GM12878 (cell line): ENCODE measurements at regions of chr9 and their contacts with region 1.

Region 1: DNA sequence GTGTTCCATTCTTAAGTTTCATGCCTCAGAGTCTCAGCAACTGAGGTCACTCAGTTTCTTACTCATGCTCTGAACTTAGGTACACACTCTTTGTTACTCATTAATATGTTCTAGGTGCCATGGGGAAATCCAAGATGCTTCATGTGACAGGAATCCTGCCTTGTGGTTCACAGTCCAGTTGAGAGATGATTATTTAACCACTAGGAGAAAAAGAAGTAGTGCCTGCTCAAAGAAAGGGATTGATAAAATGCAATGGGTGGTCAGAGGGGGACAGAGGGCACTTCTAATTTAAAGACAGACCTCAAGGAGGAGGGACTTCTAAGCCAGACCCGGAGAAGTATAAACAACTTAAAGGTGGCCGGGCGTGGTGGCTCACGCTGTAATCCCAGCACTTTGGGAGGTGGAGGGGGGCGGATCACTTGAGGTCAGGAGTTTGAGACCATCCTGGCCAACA is 69.0 kb downstream of the UGCG start:
- DNase-seq: peak; percentile 90
- ATAC-seq: peak; percentile 80
- H3K4me3 ChIP-seq: no peak overlapping the region
- H3K27ac ChIP-seq: peak overlapping the region; percentile 56
- H3K4me1 ChIP-seq: peaks cover 25% of the 10 kb centered on the region
- H3K27me3 ChIP-seq: no peaks in the 10 kb centered on the region
- CTCF ChIP-seq: no peak
- EP300 ChIP-seq: peak; percentile 82 to 89
- POLR2A ChIP-seq: no peak
- RAD21 ChIP-seq: 0 out of 2 replicates have a peak, but pooled peaks have one; percentile 3

Region 2: GRCh38 chr9:111798786-111799185 is 166.8 kb before region 1 on chr9:
- CTCF ChIA-PET with region 1: no interaction called
- POLR2A ChIA-PET with region 1: no interaction called
- RAD21 ChIA-PET with region 1: no interaction called
- SMC1A ChIA-PET with region 1: no interaction called
- in situ Hi-C with region 1: no loop called
- intact Hi-C with region 1: no loop called
- DNase-seq: no peak
- ATAC-seq: no peak
- H3K4me3 ChIP-seq: no peak overlapping the region
- H3K27ac ChIP-seq: no peak overlapping the region
- H3K4me1 ChIP-seq: no peaks in the 10 kb centered on the region
- H3K27me3 ChIP-seq: no peaks in the 10 kb centered on the region
- CTCF ChIP-seq: no peak
- EP300 ChIP-seq: no peak
- POLR2A ChIP-seq: no peak
- RAD21 ChIP-seq: no peak

Region 3: DNA sequence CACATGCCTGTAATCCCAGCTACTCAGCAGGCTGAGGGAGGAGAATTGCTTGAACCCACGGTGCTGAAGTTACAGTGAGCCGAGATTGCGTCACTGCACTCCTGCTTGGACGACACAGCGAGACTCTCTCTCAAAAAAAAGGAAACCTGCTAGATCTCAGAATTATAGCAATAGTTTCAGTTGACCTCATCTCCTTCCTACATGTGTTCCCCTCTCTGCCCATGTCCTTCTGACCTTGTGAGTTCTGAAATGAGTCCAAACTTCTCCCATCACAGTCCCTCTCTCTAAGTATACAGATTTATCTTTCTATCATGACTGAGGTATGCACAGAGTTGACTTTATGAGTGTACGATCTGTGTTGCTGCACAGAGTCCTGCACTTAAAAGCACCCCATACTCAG is 126.2 kb before region 1 on chr9:
- CTCF ChIA-PET with region 1: no interaction called
- POLR2A ChIA-PET with region 1: no interaction called
- RAD21 ChIA-PET with region 1: no interaction called
- SMC1A ChIA-PET with region 1: no interaction called
- in situ Hi-C with region 1: no loop called
- intact Hi-C with region 1: no loop called
- DNase-seq: peak; percentile 39
- ATAC-seq: peak; percentile 88
- H3K4me3 ChIP-seq: no peak overlapping the region
- H3K27ac ChIP-seq: no peak overlapping the region
- H3K4me1 ChIP-seq: peaks cover 8% of the 10 kb centered on the region; the same call in 1 of the 2 replicates
- H3K27me3 ChIP-seq: no peaks in the 10 kb centered on the region
- CTCF ChIP-seq: no peak
- EP300 ChIP-seq: no peak
- POLR2A ChIP-seq: no peak
- RAD21 ChIP-seq: no peak

Region 4: DNA sequence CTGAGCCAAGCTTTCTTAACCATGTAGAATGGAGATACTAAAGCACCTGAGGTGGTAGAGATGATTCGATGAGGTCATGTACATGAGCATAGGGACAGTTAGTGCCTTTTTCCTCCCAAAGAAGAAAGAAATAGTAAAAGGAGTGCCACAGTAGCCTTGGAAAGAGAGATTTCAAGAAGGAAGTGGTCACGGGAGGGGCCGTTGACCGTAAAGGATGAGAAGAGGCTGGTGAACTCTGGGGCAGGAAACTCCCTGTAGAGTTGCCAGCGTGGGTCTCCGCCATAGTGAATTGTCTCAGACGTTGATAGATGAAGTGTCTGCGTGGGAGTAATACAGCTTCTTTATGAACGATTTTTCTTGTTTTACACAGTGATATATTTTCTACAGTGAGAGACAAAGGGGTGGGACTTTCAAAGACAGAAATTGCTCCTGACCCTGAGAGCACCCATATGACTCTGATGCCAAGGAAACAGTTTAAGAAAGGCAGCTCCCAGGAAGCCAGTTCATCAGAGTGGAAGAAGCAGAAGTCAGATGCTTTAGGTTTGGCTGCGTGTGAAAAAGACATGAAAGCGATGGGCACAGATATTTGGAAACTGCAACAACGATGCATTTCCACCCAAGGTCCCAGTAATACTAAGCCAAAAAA is 27.7 kb before region 1 on chr9:
- CTCF ChIA-PET with region 1: interaction called, 3 read pairs
- POLR2A ChIA-PET with region 1: interaction called, 8 read pairs
- RAD21 ChIA-PET with region 1: interaction called, 22 read pairs
- SMC1A ChIA-PET with region 1: interaction called, 57 read pairs
- in situ Hi-C with region 1: no loop called
- intact Hi-C with region 1: no loop called
- DNase-seq: peak; percentile 74
- ATAC-seq: peak; percentile 90
- H3K4me3 ChIP-seq: no peak overlapping the region
- H3K27ac ChIP-seq: peak overlapping the region; percentile 80
- H3K4me1 ChIP-seq: peaks cover 21% of the 10 kb centered on the region
- H3K27me3 ChIP-seq: no peaks in the 10 kb centered on the region
- CTCF ChIP-seq: no peak
- EP300 ChIP-seq: peak; percentile 68 to 77; a peak in 2 of 4 replicates
- POLR2A ChIP-seq: no peak; the same call in none of the 2 replicates
- RAD21 ChIP-seq: no peak

Region 5: DNA sequence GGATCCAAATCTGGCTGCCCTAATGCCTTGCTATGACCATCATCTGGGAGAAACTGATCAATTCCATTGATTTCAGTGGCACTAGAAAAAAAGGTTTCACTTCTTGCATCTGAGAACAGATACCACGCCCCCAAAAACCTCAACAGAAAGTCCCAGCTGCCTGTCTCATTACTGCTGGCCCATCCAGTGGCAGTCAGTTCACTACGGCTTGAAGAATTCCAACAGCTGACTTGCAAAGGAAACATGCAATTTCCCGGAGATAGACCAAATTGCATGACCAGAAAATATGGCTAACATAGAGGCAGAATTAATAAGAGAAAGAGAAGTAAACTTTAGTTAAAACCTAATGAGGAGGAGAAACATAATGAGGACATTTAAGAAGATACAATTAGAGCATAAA is 20.4 kb before region 1 on chr9:
- CTCF ChIA-PET with region 1: interaction called, 4 read pairs
- POLR2A ChIA-PET with region 1: interaction called, 8 read pairs
- RAD21 ChIA-PET with region 1: interaction called, 13 read pairs
- SMC1A ChIA-PET with region 1: interaction called, 15 read pairs
- in situ Hi-C with region 1: no loop called
- intact Hi-C with region 1: no loop called
- DNase-seq: peak; percentile 65
- ATAC-seq: peak; percentile 87
- H3K4me3 ChIP-seq: no peak overlapping the region
- H3K27ac ChIP-seq: peak overlapping the region; percentile 47
- H3K4me1 ChIP-seq: peaks cover 34% of the 10 kb centered on the region
- H3K27me3 ChIP-seq: no peaks in the 10 kb centered on the region
- CTCF ChIP-seq: no peak
- EP300 ChIP-seq: peak; percentile 60 to 75; a peak in 2 of 4 replicates
- POLR2A ChIP-seq: no peak
- RAD21 ChIP-seq: no peak

Region 6: DNA sequence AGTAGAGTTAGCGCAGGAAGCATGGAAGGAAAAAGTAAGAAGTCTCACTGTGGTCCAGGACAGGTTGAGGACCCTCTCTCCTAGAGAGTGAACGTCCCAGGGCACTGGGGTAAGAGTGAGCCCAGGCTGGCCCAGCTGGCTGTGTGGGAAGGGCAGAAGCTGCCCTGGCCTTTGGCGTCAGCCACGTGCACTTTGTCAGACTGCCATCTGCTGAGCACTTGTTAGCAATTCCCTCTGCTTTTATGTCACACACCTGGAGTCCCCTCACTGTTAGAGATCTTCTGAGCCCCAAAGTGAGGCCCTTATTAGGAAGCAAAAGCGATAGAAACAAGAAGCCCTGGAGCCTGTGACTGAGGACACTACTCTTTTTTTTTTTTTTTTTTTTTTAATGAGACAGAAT is 10.1 kb after region 1 on chr9:
- CTCF ChIA-PET with region 1: interaction called, 5 read pairs
- POLR2A ChIA-PET with region 1: interaction called, 8 read pairs
- RAD21 ChIA-PET with region 1: interaction called, 10 read pairs
- SMC1A ChIA-PET with region 1: interaction called, 136 read pairs
- in situ Hi-C with region 1: no loop called
- intact Hi-C with region 1: no loop called
- DNase-seq: peak; percentile 39
- ATAC-seq: peak; percentile 79
- H3K4me3 ChIP-seq: no peak overlapping the region
- H3K27ac ChIP-seq: no peak overlapping the region
- H3K4me1 ChIP-seq: peaks cover 12% of the 10 kb centered on the region
- H3K27me3 ChIP-seq: no peaks in the 10 kb centered on the region
- CTCF ChIP-seq: peak; percentile 4 to 51 (median 14); a peak in 2 of 6 replicates
- EP300 ChIP-seq: no peak
- POLR2A ChIP-seq: no peak
- RAD21 ChIP-seq: peak; percentile 57

Region 7: GRCh38 chr9:112012026-112012902 is 46.7 kb after region 1 on chr9:
- CTCF ChIA-PET with region 1: interaction called, 3 read pairs
- POLR2A ChIA-PET with region 1: interaction called, 3 read pairs
- RAD21 ChIA-PET with region 1: interaction called, 8 read pairs
- SMC1A ChIA-PET with region 1: interaction called, 12 read pairs
- in situ Hi-C with region 1: no loop called
- intact Hi-C with region 1: no loop called
- DNase-seq: peak; percentile 96
- ATAC-seq: peak; percentile 92
- H3K4me3 ChIP-seq: no peak overlapping the region
- H3K27ac ChIP-seq: peak overlapping the region; percentile 92
- H3K4me1 ChIP-seq: peaks cover 52% of the 10 kb centered on the region
- H3K27me3 ChIP-seq: no peaks in the 10 kb centered on the region
- CTCF ChIP-seq: no peak
- EP300 ChIP-seq: peak; percentile 96 to 97
- POLR2A ChIP-seq: peak; percentile 43; the same call in 1 of the 2 replicates
- RAD21 ChIP-seq: peak; percentile 35